Motor neuron (in vitro differentiated cells): ENCODE measurements at regions of chr10 and their contacts with region 1.

Region 1: DNA sequence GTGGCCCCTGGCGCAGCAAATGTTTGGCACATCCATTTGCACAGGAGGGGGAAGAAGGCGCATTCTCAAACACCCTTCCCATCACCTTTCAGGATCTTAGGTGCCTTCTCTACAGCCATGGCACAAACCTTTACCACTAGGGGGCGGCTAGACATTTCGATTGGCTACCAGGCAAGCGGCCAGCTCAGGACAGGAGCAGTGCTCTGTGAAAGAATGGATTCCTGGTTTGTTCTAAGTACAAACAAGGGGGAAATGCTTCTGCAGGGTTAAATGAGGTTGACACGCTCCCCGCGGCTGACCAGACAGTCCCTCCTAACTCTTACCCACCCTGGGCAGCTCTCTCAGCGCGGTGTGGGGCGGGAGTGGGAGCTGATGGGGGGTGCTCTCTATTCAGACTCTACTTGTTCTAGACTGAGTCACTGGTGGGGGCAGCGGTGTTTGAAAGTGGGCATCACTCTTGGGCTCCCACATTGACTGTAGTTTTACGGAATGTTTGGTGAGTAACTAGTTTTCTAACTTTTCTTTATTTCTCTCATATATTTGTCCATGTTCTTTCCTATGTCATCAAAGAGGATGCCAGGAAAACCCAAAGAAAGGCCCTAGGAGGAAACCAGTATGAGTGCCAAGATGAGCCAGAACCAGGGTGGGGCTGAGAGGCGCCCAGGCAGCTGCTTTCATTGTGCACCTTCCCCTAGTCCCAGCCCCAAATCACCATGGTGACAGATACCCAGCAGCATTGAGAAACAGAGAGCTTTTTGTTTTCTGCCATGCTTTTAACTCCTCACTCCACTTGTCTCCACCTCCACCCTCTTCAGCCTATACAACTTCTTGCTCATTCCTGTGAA is 61.4 kb upstream of the GPR158 start:
- ATAC-seq: peak; percentile 88 to 99 (median 94)
- H3K4me3 ChIP-seq: no peak overlapping the region
- H3K27ac ChIP-seq: no peak overlapping the region
- H3K4me1 ChIP-seq: peaks cover 8% of the 10 kb centered on the region in 2 donors

Region 2: DNA sequence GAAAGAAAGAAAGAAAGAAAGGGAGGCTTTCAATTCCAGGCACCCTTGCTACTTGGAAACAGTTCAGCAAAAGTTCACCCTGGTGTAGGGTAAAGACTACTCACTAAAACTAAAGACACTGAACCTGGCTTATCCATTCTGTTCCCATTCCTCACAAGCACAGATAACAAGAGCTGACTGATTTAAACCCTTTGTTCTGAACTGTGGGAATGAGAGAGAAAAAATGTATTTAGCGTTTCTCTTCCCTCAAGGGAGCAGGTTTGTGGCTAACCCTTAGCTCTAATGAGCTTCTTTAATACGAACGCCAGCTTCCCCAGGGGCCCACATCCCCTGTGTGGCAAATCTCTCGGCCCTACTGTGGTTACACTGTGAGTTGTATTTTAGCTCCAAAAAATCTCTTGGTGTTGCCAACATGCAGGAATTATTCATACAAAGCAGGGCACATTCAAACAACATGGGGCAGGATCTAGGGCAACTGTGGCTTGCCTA is 184.3 kb before region 1 on chr10:
- in situ Hi-C with region 1: no loop called
- ATAC-seq: peak in 1 of 8 experiments; percentile 26
- H3K4me3 ChIP-seq: no peak overlapping the region
- H3K27ac ChIP-seq: no peak overlapping the region
- H3K4me1 ChIP-seq: peaks cover 6 to 10% of the 10 kb centered on the region in 2 donors

Region 3: DNA sequence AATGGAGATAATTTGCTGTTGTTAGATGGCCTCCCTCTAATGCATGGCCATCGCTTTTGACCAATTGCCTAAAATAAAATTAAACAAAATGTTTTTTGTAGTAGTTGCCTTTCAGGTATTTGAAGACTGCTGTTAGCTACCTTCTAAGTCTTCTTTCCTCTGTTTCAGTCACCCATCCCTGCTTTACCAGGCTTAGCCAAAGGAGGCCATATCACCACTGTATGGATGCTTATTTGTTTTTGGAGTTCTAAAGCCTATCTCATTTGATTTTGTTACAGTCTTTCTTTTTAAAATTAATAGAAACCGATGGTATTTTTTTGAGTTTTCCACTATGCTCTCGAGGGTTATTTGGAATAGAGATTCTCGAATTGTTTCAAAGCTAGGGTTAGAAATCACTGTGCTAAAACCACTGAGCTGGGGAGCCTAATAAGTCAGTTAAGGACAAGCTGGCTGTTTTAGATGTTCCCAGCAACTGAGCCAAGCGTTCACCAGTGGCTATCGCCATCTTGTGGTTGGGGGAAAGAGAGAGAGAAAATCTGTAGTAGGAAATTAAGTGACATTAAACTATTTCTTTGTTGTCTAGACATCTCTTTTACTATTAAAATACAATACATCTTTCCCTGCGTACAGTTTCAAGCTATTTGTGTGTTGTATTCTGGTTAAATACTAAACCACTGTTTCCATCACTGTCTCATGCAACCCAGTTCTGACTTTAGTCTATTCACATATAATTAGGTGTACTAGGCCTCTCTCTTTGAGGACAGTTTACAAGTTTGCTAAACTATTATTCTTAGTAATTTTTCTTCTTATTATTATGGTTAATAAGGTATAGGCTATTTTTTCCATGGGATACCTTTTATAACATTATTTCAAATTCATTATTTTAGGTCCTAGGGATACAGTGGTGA is 113.6 kb after region 1 on chr10:
- in situ Hi-C with region 1: loop called in 1 of 9 experiments (anchors 25 kb)
- ATAC-seq: peak in 6 of 8 experiments; percentile 40 to 66 (median 55)
- H3K4me3 ChIP-seq: no peak overlapping the region
- H3K27ac ChIP-seq: no peak overlapping the region
- H3K4me1 ChIP-seq: no peaks in the 10 kb centered on the region

Region 4: GRCh38 chr10:25682203-25682851 is 568.9 kb after region 1 on chr10:
- in situ Hi-C with region 1: loop called in 4 of 9 experiments (anchors 25 kb)
- ATAC-seq: peak; percentile 90 to 98 (median 94)
- H3K4me3 ChIP-seq: peak overlapping the region in 1 of 5 donors; percentile 10
- H3K27ac ChIP-seq: peak overlapping the region; percentile 10 to 33
- H3K4me1 ChIP-seq: peaks cover 9 to 11% of the 10 kb centered on the region in 2 donors